AG04450 (cell line): ENCODE measurements at regions of chr2 and their contacts with region 1.

Region 1: DNA sequence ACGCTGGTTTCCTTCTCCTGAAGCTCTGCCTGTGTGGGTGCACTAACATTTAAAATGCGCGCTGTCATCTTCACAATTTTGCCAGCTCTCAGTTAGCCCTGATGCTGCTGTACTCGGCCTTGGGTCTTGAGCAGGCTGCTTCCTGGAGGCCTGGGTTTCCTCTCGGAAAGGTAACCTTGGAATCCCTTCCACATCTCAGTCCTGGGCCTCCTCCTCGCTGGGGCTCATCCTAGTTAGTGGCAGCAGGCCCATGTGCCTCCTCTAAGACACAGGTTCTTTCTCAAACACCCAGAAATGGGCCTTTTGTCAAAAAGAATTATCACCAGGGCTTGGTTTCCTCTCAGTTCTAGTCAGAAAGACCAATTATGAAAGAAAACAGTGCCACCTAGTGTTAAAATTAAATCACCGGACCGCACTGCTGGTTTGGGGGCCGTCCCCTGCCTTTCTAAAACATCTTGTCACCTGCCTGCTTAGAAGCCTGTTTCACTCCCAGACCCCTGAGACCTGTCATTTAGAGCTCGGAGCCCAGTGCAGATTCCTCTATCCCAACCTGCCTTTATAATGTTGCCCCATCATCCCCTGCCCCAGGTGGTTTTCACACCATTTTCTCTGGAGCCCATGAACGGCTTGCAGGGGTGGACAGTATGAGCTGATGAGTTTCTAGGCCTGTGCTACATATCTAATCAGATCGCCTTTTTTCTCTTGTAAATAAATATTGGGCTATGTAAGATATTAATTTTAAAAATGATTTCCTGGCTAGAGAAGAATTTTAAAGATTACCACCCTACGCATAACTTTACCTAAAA is 42.4 kb downstream of the HK2 start:
- DNase-seq: no peak
- H3K4me3 ChIP-seq: no peak overlapping the region
- H3K27ac ChIP-seq: no peak overlapping the region
- H3K27me3 ChIP-seq: no peaks in the 10 kb centered on the region
- CTCF ChIP-seq: peak; percentile 62

Region 2: DNA sequence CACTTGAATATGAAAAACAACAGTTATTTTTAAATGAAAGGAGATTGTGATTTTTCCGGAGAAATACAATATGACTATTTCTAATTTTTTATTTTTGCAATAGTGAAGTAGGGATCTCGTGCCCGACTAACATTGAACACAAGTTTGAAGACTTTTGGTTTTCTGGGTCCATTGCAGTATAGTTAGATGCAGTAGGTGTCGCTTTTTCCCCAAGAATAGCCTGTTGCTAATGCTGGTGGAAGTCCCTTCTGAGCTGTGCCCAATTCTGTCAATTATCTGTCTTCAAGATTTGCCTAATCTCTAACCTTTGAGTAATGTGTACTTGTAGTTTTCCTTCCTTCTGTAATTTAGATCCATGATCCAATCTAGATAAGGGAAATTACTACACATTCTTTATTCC is 185.7 kb before region 1 on chr2:
- CTCF ChIA-PET with region 1: interaction called, 148 read pairs
- POLR2A ChIA-PET with region 1: interaction called, 3 read pairs
- DNase-seq: peak; percentile 41
- H3K4me3 ChIP-seq: no peak overlapping the region
- H3K27ac ChIP-seq: no peak overlapping the region
- H3K27me3 ChIP-seq: no peaks in the 10 kb centered on the region
- CTCF ChIP-seq: peak; percentile 88

Region 3: DNA sequence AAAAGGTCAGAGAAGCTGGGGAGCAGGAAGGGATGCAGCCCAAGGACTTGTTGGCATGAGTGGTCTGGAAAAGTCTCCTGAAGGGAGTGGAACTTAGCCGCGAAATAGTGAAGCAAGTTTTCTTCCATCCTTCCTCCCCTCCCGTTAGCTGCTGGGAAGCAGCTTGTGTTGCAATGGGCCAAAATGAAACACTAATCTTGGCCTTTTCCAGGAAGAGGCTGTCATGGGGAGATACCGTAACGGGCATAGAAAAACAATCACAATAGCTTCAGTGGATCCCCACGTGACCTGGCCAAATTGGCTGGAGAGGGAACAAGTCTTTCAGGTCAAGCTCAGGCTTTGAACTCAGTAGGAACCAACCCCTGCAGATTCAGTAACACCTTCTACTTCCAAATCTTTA is 172.9 kb before region 1 on chr2:
- CTCF ChIA-PET with region 1: interaction called, 14 read pairs
- POLR2A ChIA-PET with region 1: no interaction called
- DNase-seq: no peak
- H3K4me3 ChIP-seq: no peak overlapping the region
- H3K27ac ChIP-seq: no peak overlapping the region
- H3K27me3 ChIP-seq: peaks cover 3% of the 10 kb centered on the region
- CTCF ChIP-seq: no peak

Region 4: GRCh38 chr2:74715078-74715791 is 161.0 kb before region 1 on chr2:
- CTCF ChIA-PET with region 1: interaction called, 109 read pairs
- POLR2A ChIA-PET with region 1: no interaction called
- DNase-seq: peak; percentile 24
- H3K4me3 ChIP-seq: peak overlapping the region; percentile 60
- H3K27ac ChIP-seq: no peak overlapping the region
- H3K27me3 ChIP-seq: peaks cover 14% of the 10 kb centered on the region
- CTCF ChIP-seq: peak; percentile 90

Region 5: DNA sequence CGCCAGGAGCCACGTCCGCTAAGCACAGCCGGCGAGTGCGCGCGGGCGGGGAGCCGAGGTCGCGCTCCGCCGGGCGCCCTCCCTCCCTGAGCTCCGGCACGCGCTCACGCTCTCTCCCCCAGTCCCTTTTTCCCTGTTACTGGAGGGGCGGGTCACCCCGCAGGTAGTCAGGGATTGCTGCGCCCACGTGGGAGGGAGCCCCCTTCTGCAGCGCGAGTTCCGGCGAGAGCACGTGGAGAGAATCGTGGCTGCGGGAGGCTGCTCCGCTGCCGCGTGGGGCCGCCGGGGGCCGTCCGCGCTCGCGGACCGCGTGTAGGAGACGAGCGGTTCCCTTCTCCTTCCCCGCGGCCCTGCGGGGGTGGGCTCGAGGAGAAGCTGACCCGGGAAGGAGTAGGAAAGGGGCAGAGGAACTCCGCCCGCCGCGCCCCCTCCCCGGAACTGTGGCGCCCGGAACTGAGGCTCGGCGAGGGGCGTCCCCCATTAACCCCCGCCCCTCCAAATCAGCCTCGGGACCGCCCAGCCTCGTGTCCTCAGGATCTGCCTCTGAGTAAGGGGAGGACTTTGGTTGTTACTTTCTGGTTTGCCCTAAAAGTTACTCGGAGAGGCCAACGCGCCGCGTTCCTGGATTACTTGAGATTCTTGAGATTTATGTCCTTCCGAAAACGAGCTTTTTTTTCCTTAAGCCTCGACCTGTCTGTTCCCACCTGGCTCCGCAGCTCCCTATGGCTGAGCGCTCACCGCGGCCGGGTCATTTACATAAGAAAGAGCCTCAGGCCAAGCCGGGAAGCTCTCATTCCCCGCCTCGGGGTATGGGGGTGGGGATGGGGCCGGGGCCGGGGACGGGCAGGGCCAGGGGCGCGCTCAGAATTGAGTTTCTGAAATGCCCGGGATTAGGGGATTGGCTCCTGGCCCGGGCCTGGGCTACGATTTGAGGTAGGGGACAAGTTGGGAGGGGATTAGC is 41.2 kb before region 1 on chr2:
- CTCF ChIA-PET with region 1: interaction called, 31 read pairs
- POLR2A ChIA-PET with region 1: interaction called, 5 read pairs
- DNase-seq: no peak
- H3K4me3 ChIP-seq: peak overlapping the region; percentile 77
- H3K27ac ChIP-seq: peak overlapping the region; percentile 65
- H3K27me3 ChIP-seq: no peaks in the 10 kb centered on the region
- CTCF ChIP-seq: no peak

Region 6: GRCh38 chr2:74886811-74887210 is 10.5 kb after region 1 on chr2:
- CTCF ChIA-PET with region 1: interaction called, 19 read pairs
- POLR2A ChIA-PET with region 1: no interaction called
- DNase-seq: no peak
- H3K4me3 ChIP-seq: no peak overlapping the region
- H3K27ac ChIP-seq: peak overlapping the region; percentile 12
- H3K27me3 ChIP-seq: no peaks in the 10 kb centered on the region
- CTCF ChIP-seq: no peak